ENCODE measurements at regions of chr16 and their contacts with region 1.

Region 1: GRCh38 chr16:49592546-49593423 is 219.2 kb downstream of the C16orf78 start:
- DNase-seq: peak; percentile 62
- ATAC-seq: peak; percentile 76
- H3K4me3 Mint-ChIP-seq: no peak overlapping the region
- H3K27ac Mint-ChIP-seq: no peak overlapping the region
- H3K4me1 Mint-ChIP-seq: peaks cover 3% of the 10 kb centered on the region
- H3K27me3 Mint-ChIP-seq: peaks cover 4% of the 10 kb centered on the region
- CTCF ChIP-seq: peak; percentile 59

Region 2: GRCh38 chr16:49407873-49408550 is 184.8 kb before region 1 on chr16:
- CTCF ChIA-PET with region 1: interaction called, 29 read pairs
- POLR2A ChIA-PET with region 1: no interaction called
- intact Hi-C with region 1: loop called (anchors 5 kb)
- DNase-seq: peak; percentile 80
- ATAC-seq: peak; percentile 96
- H3K4me3 Mint-ChIP-seq: no peak overlapping the region
- H3K27ac Mint-ChIP-seq: no peak overlapping the region
- H3K4me1 Mint-ChIP-seq: peaks cover 3% of the 10 kb centered on the region
- H3K27me3 Mint-ChIP-seq: peaks cover 8% of the 10 kb centered on the region
- CTCF ChIP-seq: peak; percentile 86

Region 3: GRCh38 chr16:49441366-49441780 is 151.4 kb before region 1 on chr16:
- CTCF ChIA-PET with region 1: interaction called, 10 read pairs
- POLR2A ChIA-PET with region 1: no interaction called
- intact Hi-C with region 1: no loop called
- DNase-seq: peak; percentile 87
- ATAC-seq: peak; percentile 99
- H3K4me3 Mint-ChIP-seq: peak overlapping the region; percentile 16
- H3K27ac Mint-ChIP-seq: peak overlapping the region; percentile 23
- H3K4me1 Mint-ChIP-seq: peaks cover 23% of the 10 kb centered on the region
- H3K27me3 Mint-ChIP-seq: no peaks in the 10 kb centered on the region
- CTCF ChIP-seq: peak; percentile 49

Region 4: DNA sequence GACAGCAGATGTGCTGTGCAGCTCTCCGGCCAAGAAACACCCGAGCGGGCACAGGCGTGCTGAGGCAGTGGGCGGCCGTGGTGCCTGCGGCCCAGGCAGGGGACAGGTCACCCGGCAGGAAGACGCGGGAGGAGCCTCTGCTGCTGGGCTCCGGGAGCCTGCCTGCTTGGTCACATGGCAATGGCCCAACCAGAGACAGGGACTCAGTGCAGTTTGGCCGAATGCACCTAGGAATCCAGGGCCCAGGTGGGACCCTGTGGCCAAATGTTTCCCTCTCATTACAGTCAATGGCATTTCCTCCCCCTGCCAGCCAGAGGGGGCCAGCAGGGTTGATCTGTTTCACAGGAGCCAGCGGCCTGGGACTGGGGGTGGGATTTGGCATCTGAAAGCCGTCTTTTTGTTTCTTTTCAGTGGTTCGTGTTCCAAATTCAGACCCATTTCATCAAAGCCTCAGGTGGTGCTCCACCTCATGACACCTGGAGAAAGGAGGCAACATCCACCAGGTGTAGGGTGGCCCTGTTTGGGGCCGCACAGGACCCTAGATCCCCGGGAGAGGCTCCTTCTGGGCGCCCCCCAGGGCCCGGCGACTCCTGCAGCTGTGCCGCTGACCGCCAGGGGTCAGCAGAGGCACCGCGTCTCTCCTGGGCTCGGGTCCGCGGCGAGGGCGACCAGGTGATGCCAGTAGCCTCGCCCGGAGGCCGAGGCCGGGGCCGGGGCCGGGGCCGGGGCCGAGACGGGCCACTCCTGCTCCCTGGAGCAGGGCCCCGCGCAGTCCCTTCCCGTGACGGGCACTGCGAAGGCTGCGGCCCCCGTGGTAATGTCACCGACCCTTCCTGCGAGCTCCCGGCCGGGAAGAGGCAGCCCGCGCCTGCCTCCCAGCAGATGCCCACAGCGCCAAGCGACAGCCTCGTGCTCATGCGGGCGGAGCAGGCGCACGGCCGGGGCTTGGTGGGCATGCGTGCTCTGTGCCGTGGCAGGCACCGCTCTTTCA is 100.7 kb before region 1 on chr16:
- CTCF ChIA-PET with region 1: interaction called, 14 read pairs
- POLR2A ChIA-PET with region 1: no interaction called
- intact Hi-C with region 1: no loop called
- DNase-seq: peak; percentile 34
- ATAC-seq: peak; percentile 86
- H3K4me3 Mint-ChIP-seq: no peak overlapping the region
- H3K27ac Mint-ChIP-seq: no peak overlapping the region
- H3K4me1 Mint-ChIP-seq: no peaks in the 10 kb centered on the region
- H3K27me3 Mint-ChIP-seq: no peaks in the 10 kb centered on the region
- CTCF ChIP-seq: peak; percentile 90

Measured in activated CD8-positive, alpha-beta T cell treated with anti-CD3 and anti-CD28 coated beads for 36 hours (primary cell).